ENCODE measurements at regions of chrX and their contacts with region 1.

Region 1: GRCh38 chrX:48083212-48083611 is 11.8 kb upstream of the ZNF630 start:
- DNase-seq: peak; percentile 60 to 73
- H3K4me3 ChIP-seq: no peak overlapping the region
- H3K4me1 ChIP-seq: no peaks in the 10 kb centered on the region
- H3K27me3 ChIP-seq: no peaks in the 10 kb centered on the region

Region 2: DNA sequence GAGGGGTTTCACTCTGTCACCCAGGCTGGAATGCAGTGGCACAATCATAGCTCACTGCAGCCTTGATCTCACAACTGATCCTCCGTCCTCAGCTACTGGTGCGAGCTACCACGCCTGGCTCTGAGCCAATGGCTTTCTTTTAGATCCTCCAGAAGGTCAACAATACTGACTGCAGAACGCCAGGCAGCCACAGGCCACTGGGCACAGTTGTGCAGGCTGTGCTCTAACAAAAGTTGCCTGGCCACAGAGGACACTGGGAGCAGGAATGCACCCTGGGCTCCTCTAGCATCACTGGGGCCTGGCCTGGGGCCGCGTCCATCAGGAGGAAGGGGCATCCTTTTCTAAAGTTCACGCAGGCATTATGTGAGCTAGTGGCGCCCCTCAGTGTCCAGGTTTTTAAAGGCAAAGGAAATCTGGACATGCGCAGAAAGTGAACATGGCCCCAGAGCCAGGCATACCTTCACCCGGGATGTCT is 410.7 kb after region 1 on chrX:
- in situ Hi-C with region 1: loop called (anchors 10 kb)
- DNase-seq: peak; percentile 12 to 66
- H3K4me3 ChIP-seq: no peak overlapping the region
- H3K4me1 ChIP-seq: no peaks in the 10 kb centered on the region; the same call in 1 of the 2 replicates
- H3K27me3 ChIP-seq: no peaks in the 10 kb centered on the region

Measured in HAP-1 (cell line).